H1 (cell line): ENCODE measurements at regions of chr3 and their contacts with region 1.

Region 1: GRCh38 chr3:130111185-130111864 is 29.7 kb downstream of the ALG1L2 start:
- DNase-seq: peak; percentile 93 to 98
- H3K4me3 ChIP-seq: peak overlapping the region; percentile 62 to 88 (median 82)
- H3K27ac ChIP-seq: no peak overlapping the region; the same call in 1 of the 2 replicates
- H3K4me1 ChIP-seq: peaks cover 0 to 3% (median 0%) of the 10 kb centered on the region in 4 experiments; a peak in 1 of 7 replicates
- H3K27me3 ChIP-seq: no peaks in the 10 kb centered on the region
- CTCF ChIP-seq: no peak
- EP300 ChIP-seq: no peak
- POLR2A ChIP-seq: peak in 1 of 2 experiments; percentile 45; a peak in 1 of 3 replicates
- RAD21 ChIP-seq: no peak

Region 2: DNA sequence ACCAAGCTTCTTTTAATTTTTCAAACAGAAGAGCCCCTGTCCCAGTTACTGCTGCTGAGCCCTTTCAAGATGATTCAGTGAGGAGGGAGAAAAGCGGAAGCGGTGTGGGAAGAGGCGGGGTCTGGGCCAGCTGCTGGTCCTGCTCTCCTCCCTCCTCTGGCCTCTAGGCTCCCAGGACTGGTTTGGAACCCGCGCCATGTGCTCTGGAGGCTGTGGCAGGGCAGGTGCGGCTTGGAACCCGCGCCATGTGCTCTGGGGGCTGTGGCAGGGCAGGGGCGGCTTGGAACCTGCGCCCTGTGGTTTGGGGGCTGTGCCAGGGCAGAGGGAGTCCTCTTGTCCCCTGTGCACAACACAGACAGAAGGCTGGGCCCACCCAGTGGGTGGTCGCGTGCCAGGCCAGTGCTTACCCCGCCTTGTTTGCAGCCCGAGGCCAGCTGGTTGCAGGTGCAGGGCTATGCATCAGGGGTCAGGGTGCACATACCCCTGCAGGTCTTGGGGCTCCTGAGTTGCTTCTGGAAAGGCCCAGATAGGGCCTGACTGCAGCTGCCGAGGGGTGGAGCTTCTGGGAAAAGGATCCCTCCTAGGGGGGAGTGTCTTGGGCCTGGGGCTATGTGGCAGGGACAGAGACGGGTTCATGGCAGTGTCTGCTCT is 17.5 kb before region 1 on chr3:
- CTCF ChIA-PET with region 1: interaction called, 10 read pairs
- POLR2A ChIA-PET with region 1: no interaction called
- DNase-seq: peak in 1 of 2 experiments; percentile 61
- H3K4me3 ChIP-seq: no peak overlapping the region
- H3K27ac ChIP-seq: no peak overlapping the region
- H3K4me1 ChIP-seq: peaks cover 0 to 13% (median 4%) of the 10 kb centered on the region in 4 experiments; a peak in 3 of 7 replicates
- H3K27me3 ChIP-seq: no peaks in the 10 kb centered on the region
- CTCF ChIP-seq: no peak
- EP300 ChIP-seq: no peak
- POLR2A ChIP-seq: no peak
- RAD21 ChIP-seq: no peak